CD8-positive, alpha-beta T cell (primary cell): ENCODE measurements at regions of chr11 and their contacts with region 1.

Region 1: DNA sequence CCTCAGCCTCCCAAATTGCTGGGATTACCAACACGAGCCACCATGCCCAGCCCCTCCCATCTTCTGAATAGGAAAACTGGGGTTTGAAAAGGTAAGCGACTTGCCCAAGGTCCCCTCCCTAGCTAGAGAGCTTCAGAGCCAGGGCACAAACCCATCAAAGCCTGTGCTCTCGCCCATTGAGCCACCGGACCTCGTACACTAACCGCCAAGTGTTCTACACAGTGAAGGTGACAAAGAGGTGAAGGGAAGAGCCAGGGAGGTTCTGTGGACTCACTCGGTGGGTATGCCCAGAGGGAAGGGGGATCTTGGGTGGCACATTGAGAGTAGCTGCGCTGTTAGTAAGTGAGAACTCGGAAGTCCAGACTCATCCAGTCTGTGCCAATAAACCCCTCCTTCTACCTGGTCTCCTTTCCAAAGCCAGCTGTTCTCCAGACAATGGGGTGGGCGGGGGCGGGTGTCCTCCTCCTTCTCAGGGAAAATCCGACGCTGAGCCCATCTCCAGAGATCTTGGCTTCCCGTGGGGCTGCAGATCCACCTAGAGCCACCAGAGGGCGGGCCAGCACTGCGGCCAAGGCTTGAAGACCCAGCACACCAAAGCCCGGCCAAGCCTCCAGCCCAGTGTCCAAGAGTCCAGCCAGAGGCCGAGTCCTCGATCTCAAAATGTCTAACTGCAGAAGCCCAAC is 3.2 kb upstream of the RTN4RL2 start:
- DNase-seq: peak in 8 of 9 experiments; percentile 55 to 83 (median 78)
- ATAC-seq: peak; percentile 60
- H3K4me3 ChIP-seq: no peak overlapping the region
- H3K4me3 Mint-ChIP-seq: peak overlapping the region; percentile 73
- H3K27ac ChIP-seq: no peak overlapping the region
- H3K27ac Mint-ChIP-seq: no peak overlapping the region
- H3K4me1 ChIP-seq: peaks cover 37% of the 10 kb centered on the region
- H3K4me1 Mint-ChIP-seq: peaks cover 27% of the 10 kb centered on the region
- H3K27me3 ChIP-seq: peaks cover 14 to 35% of the 10 kb centered on the region in 2 experiments
- H3K27me3 Mint-ChIP-seq: peaks cover 25% of the 10 kb centered on the region
- CTCF ChIP-seq: peak; percentile 99

Region 2: GRCh38 chr11:56967726-56968125 is 489.4 kb before region 1 on chr11:
- CTCF ChIA-PET with region 1: no interaction called
- POLR2A ChIA-PET with region 1: no interaction called
- intact Hi-C with region 1: no loop called
- DNase-seq: no peak
- ATAC-seq: no peak
- H3K4me3 ChIP-seq: no peak overlapping the region
- H3K4me3 Mint-ChIP-seq: no peak overlapping the region
- H3K27ac ChIP-seq: no peak overlapping the region
- H3K27ac Mint-ChIP-seq: no peak overlapping the region
- H3K4me1 ChIP-seq: no peaks in the 10 kb centered on the region
- H3K4me1 Mint-ChIP-seq: no peaks in the 10 kb centered on the region
- H3K27me3 ChIP-seq: no peaks in the 10 kb centered on the region
- H3K27me3 Mint-ChIP-seq: no peaks in the 10 kb centered on the region
- CTCF ChIP-seq: no peak

Region 3: DNA sequence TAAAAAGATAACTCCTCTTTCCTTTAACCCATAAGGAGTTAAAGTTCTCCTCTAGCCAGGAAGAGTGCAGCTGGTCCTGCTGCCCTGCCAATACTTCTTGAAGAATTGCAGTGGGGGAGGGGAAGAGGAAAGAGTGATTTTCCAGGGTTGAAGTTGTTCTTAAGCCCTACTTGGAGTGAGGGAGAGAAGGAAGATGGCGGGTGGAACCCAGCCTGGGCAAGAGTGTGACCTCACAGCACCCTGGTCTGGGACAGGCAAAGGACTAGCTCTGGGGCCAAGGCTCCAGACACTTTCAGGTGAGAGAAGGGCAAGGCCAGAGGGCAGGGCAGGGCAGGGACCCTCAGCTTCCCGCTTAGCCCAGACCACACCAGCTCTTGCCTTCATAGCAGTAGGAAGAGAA is 138.9 kb before region 1 on chr11:
- CTCF ChIA-PET with region 1: no interaction called
- POLR2A ChIA-PET with region 1: no interaction called
- intact Hi-C with region 1: no loop called
- DNase-seq: no peak
- ATAC-seq: no peak
- H3K4me3 ChIP-seq: no peak overlapping the region
- H3K4me3 Mint-ChIP-seq: no peak overlapping the region
- H3K27ac ChIP-seq: no peak overlapping the region
- H3K27ac Mint-ChIP-seq: no peak overlapping the region
- H3K4me1 ChIP-seq: peaks cover 24% of the 10 kb centered on the region
- H3K4me1 Mint-ChIP-seq: peaks cover 12% of the 10 kb centered on the region
- H3K27me3 ChIP-seq: no peaks in the 10 kb centered on the region
- H3K27me3 Mint-ChIP-seq: no peaks in the 10 kb centered on the region
- CTCF ChIP-seq: no peak

Region 4: GRCh38 chr11:57426929-57427726 is 30.0 kb before region 1 on chr11 and contains the start of gene SLC43A3:
- CTCF ChIA-PET with region 1: interaction called, 13 read pairs
- POLR2A ChIA-PET with region 1: interaction called, 3 read pairs
- intact Hi-C with region 1: loop called (anchors 1 to 2 kb)
- DNase-seq: peak in 8 of 9 experiments; percentile 46 to 80 (median 64)
- ATAC-seq: peak; percentile 32
- H3K4me3 ChIP-seq: peak within 1 kb of the TSS; percentile 47 to 63
- H3K4me3 Mint-ChIP-seq: peak within 1 kb of the TSS; percentile 86
- H3K27ac ChIP-seq: peak within 1 kb of the TSS in 1 of 2 experiments; percentile 85
- H3K27ac Mint-ChIP-seq: peak within 1 kb of the TSS; percentile 89
- H3K4me1 ChIP-seq: peaks cover 31% of the 10 kb centered on the region
- H3K4me1 Mint-ChIP-seq: peaks cover 46% of the 10 kb centered on the region
- H3K27me3 ChIP-seq: no peaks in the 10 kb centered on the region
- H3K27me3 Mint-ChIP-seq: no peaks in the 10 kb centered on the region
- CTCF ChIP-seq: no peak
- total RNA-seq, gene SLC43A3: 9.3 to 11.3 TPM

Region 5: DNA sequence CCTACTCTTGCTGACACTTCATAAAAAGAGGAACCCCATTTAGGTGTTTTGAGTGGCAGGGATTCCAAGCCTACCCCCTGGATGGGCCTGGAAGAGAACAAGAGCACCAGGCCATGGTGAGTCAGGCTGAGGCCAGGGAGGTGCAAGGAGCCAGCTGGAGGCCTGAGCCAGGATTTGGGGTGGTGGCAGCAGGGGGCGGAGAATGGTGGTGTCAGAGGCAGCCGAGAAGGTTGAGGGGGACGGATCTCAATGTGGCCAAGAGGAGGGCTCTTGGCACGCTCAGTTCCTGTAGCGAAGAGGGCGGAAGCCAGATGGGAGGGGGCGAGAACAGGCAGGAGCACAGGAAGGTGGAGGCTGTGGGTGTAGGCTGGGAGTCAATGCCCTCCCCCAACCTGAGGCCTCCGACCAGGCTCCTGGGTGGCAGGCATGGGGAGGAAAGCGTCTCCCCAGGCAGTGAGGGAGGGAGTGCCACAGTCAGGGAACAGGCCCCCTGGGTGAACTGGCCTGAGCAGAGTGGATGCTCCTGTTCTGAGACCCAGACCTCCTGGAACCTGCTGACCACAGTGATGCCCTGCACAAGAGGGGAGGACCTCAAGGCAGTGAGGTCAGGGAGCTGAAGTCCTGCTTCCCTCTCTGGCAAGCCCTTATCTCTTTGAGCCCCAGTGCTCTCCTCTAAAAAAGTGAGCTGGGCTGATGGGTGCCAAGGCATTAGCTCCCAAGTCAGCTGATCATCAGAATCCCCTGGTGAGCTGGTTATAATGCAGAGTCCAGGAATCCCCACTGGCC is 17.1 kb after region 1 on chr11:
- CTCF ChIA-PET with region 1: interaction called, 237 read pairs
- POLR2A ChIA-PET with region 1: interaction called, 8 read pairs
- intact Hi-C with region 1: no loop called
- DNase-seq: peak in 7 of 9 experiments; percentile 31 to 79 (median 58)
- ATAC-seq: peak; percentile 75
- H3K4me3 ChIP-seq: peak overlapping the region in 1 of 2 experiments; percentile 8
- H3K4me3 Mint-ChIP-seq: peak overlapping the region; percentile 70
- H3K27ac ChIP-seq: no peak overlapping the region
- H3K27ac Mint-ChIP-seq: peak overlapping the region; percentile 35
- H3K4me1 ChIP-seq: peaks cover 29% of the 10 kb centered on the region
- H3K4me1 Mint-ChIP-seq: peaks cover 37% of the 10 kb centered on the region
- H3K27me3 ChIP-seq: no peaks in the 10 kb centered on the region
- H3K27me3 Mint-ChIP-seq: no peaks in the 10 kb centered on the region
- CTCF ChIP-seq: no peak

Region 6: GRCh38 chr11:57493507-57494503 is 36.7 kb after region 1 on chr11:
- CTCF ChIA-PET with region 1: interaction called, 237 read pairs
- POLR2A ChIA-PET with region 1: no interaction called
- intact Hi-C with region 1: no loop called
- DNase-seq: peak; percentile 57 to 85 (median 76)
- ATAC-seq: peak; percentile 97
- H3K4me3 ChIP-seq: no peak overlapping the region
- H3K4me3 Mint-ChIP-seq: no peak overlapping the region
- H3K27ac ChIP-seq: no peak overlapping the region
- H3K27ac Mint-ChIP-seq: no peak overlapping the region
- H3K4me1 ChIP-seq: no peaks in the 10 kb centered on the region
- H3K4me1 Mint-ChIP-seq: no peaks in the 10 kb centered on the region
- H3K27me3 ChIP-seq: no peaks in the 10 kb centered on the region
- H3K27me3 Mint-ChIP-seq: peaks cover 2% of the 10 kb centered on the region
- CTCF ChIP-seq: peak; percentile 91

Region 7: GRCh38 chr11:57644748-57645688 is 187.9 kb after region 1 on chr11:
- CTCF ChIA-PET with region 1: interaction called, 22 read pairs
- POLR2A ChIA-PET with region 1: no interaction called
- intact Hi-C with region 1: loop called (anchors 1 to 2 kb)
- DNase-seq: peak; percentile 74 to 93 (median 85)
- ATAC-seq: peak; percentile 61
- H3K4me3 ChIP-seq: no peak overlapping the region
- H3K4me3 Mint-ChIP-seq: no peak overlapping the region
- H3K27ac ChIP-seq: no peak overlapping the region
- H3K27ac Mint-ChIP-seq: no peak overlapping the region
- H3K4me1 ChIP-seq: peaks cover 15% of the 10 kb centered on the region
- H3K4me1 Mint-ChIP-seq: peaks cover 34% of the 10 kb centered on the region
- H3K27me3 ChIP-seq: peaks cover 0 to 22% of the 10 kb centered on the region in 2 experiments
- H3K27me3 Mint-ChIP-seq: peaks cover 48% of the 10 kb centered on the region
- CTCF ChIP-seq: peak; percentile 78